WTC11 (cell line): ENCODE measurements at regions of chr2 and their contacts with region 1.

Region 1: DNA sequence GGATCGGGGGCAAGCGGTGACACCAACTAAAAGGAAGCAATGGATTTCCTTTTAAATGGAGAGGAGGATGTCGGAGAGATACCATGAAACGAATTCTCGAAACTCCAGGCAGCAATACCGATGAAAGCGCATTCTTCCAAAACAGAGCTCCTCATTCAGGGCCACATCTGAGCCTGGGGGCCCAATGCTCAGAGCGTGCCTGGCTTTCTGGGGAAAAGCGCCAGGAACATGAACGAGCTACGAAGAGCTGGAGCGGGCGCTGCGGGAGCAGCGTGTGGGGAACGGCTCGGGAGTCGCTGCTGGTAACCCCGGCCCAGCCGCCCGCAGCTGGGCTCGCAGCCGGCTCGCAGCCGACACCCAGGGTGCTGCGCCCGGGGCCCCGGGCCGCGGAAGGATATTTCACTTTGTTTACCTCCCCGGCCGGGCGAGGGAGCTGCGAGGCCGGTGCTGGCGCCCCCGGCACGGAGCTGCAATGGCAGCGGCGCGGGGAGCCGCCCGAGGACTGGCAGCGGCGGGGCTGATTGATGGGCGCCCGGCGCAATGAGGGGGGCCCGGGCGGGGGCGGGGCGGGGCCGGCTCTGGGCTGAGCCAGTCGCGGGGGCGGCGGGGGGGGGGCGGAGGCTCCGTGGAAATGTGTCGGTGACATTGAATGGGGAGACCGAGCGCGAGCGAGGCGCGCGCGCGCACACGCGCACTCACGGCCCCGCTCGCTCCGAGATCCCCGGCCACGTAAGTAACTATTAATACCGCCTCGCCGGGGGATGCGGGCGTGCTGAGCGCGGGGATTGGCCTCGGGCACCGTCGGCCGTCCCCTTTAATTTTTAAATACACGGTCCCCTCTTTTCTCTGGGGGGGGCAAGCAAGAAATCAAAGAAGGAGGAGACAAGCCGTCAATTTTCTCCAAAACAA is at the start of gene TRIB2:
- DNase-seq: peak; percentile 78
- ATAC-seq: peak; percentile 67
- H3K4me3 Mint-ChIP-seq: peak within 1 kb of the TSS; percentile 98
- H3K27ac Mint-ChIP-seq: peak within 1 kb of the TSS; percentile 94
- H3K4me1 Mint-ChIP-seq: peaks cover 38% of the 10 kb centered on the region
- H3K27me3 Mint-ChIP-seq: peaks cover 5% of the 10 kb centered on the region; the same call in 1 of the 2 replicates
- CTCF ChIP-seq: 0 out of 2 replicates have a peak, but pooled peaks have one; percentile 7
- total RNA-seq, gene TRIB2: 79.6 to 89.3 TPM (median 83.1 TPM) in 3 replicates

Region 2: GRCh38 chr2:11829947-11830707 is 886.4 kb before region 1 on chr2:
- CTCF ChIA-PET with region 1: interaction called, 18 read pairs
- POLR2A ChIA-PET with region 1: interaction called, 3 read pairs
- DNase-seq: peak; percentile 76
- ATAC-seq: peak; percentile 90
- H3K4me3 Mint-ChIP-seq: peak overlapping the region; percentile 51
- H3K27ac Mint-ChIP-seq: peak overlapping the region; percentile 97
- H3K4me1 Mint-ChIP-seq: peaks cover 48% of the 10 kb centered on the region
- H3K27me3 Mint-ChIP-seq: no peaks in the 10 kb centered on the region
- CTCF ChIP-seq: no peak

Region 3: GRCh38 chr2:12555012-12555645 is 161.4 kb before region 1 on chr2:
- CTCF ChIA-PET with region 1: interaction called, 15 read pairs
- POLR2A ChIA-PET with region 1: no interaction called
- DNase-seq: no peak
- ATAC-seq: peak; percentile 82
- H3K4me3 Mint-ChIP-seq: no peak overlapping the region
- H3K27ac Mint-ChIP-seq: no peak overlapping the region
- H3K4me1 Mint-ChIP-seq: peaks cover 20% of the 10 kb centered on the region
- H3K27me3 Mint-ChIP-seq: no peaks in the 10 kb centered on the region
- CTCF ChIP-seq: no peak

Region 4: GRCh38 chr2:12684471-12684936 is 32.0 kb before region 1 on chr2:
- CTCF ChIA-PET with region 1: interaction called, 12 read pairs
- POLR2A ChIA-PET with region 1: no interaction called
- DNase-seq: no peak
- ATAC-seq: peak; percentile 60
- H3K4me3 Mint-ChIP-seq: no peak overlapping the region; the same call in 1 of the 2 replicates
- H3K27ac Mint-ChIP-seq: no peak overlapping the region
- H3K4me1 Mint-ChIP-seq: peaks cover 49% of the 10 kb centered on the region
- H3K27me3 Mint-ChIP-seq: peaks cover 14% of the 10 kb centered on the region; the same call in 1 of the 2 replicates
- CTCF ChIP-seq: no peak

Region 5: DNA sequence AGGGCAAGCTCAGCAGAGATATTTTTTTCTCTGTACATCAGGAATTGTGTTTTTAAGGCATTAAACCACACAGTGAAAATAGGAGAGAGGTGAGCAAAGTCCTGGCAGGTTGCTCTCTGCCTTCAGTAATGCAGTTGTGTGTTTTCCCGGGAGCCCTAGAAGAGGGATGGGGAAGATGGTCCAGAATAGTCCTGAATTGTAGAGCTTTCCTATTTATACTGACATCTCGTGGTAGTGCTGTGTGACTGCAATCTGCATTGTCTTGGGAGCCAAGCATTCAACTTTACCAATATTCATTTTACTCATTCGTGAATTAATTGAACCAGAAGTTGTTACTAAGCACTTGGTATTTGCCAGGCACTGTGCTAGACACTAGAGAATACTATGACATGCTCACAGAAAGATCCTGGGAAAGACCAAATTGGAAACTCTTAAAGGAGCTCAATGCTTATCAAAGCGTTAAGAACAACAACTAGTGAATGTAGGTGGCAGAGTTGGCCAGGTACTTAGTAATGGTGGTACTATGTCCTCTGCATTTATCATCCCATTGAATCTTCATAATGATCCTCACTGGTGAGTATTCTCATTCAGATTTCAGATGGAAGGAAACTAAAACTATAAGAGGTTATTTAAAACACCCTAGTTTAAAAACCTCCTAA is 214.8 kb after region 1 on chr2:
- CTCF ChIA-PET with region 1: interaction called, 17 read pairs
- POLR2A ChIA-PET with region 1: interaction called, 3 read pairs
- DNase-seq: no peak
- ATAC-seq: peak; percentile 92
- H3K4me3 Mint-ChIP-seq: no peak overlapping the region
- H3K27ac Mint-ChIP-seq: no peak overlapping the region
- H3K4me1 Mint-ChIP-seq: peaks cover 28% of the 10 kb centered on the region
- H3K27me3 Mint-ChIP-seq: peaks cover 3% of the 10 kb centered on the region
- CTCF ChIP-seq: peak; percentile 37; the same call in 1 of the 2 replicates